ENCODE measurements at regions of chr12 and their contacts with region 1.

Region 1: DNA sequence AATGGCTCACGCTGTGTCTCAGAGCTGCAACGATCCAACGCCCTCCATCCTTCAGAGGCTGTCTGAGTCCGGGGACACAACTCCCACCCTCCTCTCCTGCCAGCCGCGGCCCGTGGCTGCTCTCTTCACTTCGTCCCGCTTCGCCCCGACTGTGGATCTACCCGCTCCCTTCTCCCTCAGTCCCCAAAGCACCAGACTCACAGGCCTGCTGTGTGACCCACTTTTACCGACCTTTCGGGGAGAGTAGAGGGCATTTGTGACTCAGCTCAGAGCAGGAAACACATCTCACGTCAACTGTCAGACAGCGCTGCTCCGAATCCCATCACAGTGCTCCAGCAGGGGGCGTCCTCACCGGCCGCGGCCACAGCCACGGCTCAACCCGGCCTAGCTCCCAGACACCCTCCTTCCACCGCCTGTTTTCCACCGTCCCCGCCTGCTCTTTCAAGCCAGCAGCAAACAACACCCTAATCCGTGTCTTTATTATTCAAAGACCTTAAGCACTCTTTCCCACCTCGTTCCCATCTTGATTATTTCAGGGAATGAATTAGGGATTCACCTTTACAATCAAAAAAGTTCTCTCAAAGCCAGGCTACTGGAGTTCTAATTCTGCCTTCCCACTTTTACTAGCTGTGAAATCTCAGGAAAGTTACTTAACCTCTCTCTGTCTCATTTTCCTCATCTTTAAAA is 5.0 kb upstream of the AQP2 start:
- H3K4me3 ChIP-seq: peak overlapping the region; percentile 14; the same call in 1 of the 2 replicates
- H3K27ac ChIP-seq: no peak overlapping the region
- H3K4me1 ChIP-seq: no peaks in the 10 kb centered on the region
- CTCF ChIP-seq: peak; percentile 98

Region 2: GRCh38 chr12:49800421-49801140 is 145.0 kb before region 1 on chr12:
- CTCF ChIA-PET with region 1: no interaction called
- POLR2A ChIA-PET with region 1: no interaction called
- H3K4me3 ChIP-seq: no peak overlapping the region
- H3K27ac ChIP-seq: no peak overlapping the region
- H3K4me1 ChIP-seq: no peaks in the 10 kb centered on the region
- CTCF ChIP-seq: no peak

Region 3: DNA sequence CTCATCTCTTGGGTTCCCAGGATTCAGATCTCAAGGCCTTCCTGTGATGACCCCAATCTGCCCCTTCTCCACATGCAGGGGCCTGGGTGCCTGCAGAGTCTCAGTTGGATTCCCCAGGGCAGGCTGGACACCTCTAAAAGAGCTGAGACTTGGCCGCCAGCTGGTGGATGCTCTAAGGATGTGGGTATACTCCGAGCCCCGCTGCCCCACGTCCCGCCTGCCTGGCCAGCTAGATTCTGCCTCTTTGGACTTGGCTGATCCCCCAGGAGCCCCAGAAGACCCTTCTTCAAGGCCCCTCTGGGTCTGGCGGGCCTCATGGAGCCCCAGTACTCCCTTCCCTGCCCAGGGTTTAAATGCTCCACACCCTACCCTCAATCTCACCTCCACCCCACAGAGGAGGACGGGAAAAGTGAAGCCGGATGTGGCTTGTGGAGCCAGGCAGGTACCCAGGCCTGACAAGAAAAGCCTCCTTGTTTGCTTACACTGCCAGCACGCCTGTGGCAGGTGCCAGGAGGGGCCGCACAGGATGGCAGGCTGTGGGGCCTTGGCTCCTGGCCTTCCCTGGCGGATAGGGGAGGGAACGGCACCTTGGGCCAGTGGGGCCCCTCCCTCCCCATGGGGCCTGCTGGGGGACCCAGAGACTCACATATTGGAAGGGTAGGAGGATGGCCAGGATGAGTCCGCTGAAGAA is 56.9 kb before region 1 on chr12:
- CTCF ChIA-PET with region 1: interaction called, 16 read pairs
- POLR2A ChIA-PET with region 1: interaction called, 3 read pairs
- H3K4me3 ChIP-seq: no peak overlapping the region
- H3K27ac ChIP-seq: no peak overlapping the region
- H3K4me1 ChIP-seq: 0 out of 2 replicates have a peak, but pooled peaks cover 4% of the 10 kb centered on the region
- CTCF ChIP-seq: no peak

Region 4: DNA sequence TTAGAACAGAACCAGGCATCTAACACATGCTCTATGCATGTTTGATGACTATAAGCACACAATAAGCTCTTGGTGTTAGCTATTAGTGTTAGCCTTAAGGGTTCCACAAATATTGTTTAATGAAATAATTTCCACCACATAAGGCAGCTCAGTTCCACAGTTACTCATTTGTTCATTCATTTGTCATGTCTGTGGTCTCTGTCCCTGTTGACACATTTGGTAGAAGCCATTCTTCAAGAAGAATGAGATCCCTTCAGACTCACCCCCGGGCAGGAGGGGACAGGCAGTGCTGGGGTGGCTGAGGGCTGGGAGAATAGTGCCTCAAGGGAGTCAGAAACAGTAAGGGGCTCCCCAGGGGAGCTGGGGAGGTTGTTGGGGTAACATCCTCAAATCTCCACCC is 38.2 kb before region 1 on chr12:
- CTCF ChIA-PET with region 1: interaction called, 14 read pairs
- POLR2A ChIA-PET with region 1: interaction called, 10 read pairs
- H3K4me3 ChIP-seq: no peak overlapping the region
- H3K27ac ChIP-seq: no peak overlapping the region
- H3K4me1 ChIP-seq: peaks cover 5% of the 10 kb centered on the region
- CTCF ChIP-seq: no peak

Region 5: GRCh38 chr12:49959570-49960465 is 14.3 kb after region 1 on chr12:
- CTCF ChIA-PET with region 1: interaction called, 50 read pairs
- POLR2A ChIA-PET with region 1: interaction called, 3 read pairs
- H3K4me3 ChIP-seq: no peak overlapping the region
- H3K27ac ChIP-seq: no peak overlapping the region
- H3K4me1 ChIP-seq: 0 out of 2 replicates have a peak, but pooled peaks cover 5% of the 10 kb centered on the region
- CTCF ChIP-seq: no peak

Region 6: DNA sequence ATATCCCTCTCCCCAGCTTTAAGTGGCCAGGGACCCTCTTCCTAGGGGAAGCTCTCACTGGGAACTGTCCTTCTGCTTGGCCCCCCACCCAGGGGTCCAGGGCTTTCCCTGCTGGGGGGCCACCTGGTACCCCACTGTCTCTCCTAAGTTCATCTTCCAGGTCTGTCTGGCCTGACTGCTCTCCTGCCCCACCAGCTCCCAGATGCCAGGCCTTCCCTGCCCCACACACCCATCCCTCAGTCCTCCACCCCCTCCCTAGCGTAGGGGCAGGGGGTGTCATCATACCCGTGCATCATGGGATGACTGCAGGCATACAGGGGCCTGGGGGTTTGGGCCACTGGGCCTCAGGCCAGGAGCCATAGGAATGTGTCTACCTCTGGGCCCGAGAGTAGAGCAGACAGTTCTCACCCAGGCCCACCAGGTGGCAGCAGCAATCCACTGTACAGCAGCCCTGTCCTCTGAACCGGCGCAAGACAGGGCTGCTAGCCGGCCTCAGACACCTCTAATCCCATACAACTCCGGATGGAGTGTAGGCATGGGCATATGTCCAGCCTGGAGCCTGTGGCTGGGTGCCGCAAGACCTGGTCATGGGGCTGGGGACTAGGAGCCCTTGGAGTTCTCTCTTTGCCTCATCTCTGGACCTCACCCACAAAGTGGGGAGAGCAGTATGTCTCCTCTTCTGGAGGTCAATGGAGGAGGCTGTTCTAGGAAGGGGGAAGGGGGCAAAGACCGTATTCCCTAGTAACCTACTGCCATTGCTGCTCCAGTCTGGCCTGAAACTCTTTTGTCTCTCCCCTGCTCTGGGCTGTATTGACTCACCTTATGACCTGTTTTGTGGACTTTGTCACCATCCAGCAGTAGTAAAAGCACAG is 129.6 kb after region 1 on chr12:
- CTCF ChIA-PET with region 1: interaction called, 18 read pairs
- POLR2A ChIA-PET with region 1: interaction called, 3 read pairs
- H3K4me3 ChIP-seq: no peak overlapping the region
- H3K27ac ChIP-seq: no peak overlapping the region
- H3K4me1 ChIP-seq: no peaks in the 10 kb centered on the region
- CTCF ChIP-seq: peak; percentile 95